Adrenal gland (tissue), 19 donors: ENCODE measurements at regions of chr11 and their contacts with region 1.

Region 1: GRCh38 chr11:14300661-14301304 is 58.2 kb downstream of the RRAS2 start:
- DNase-seq: peak; percentile 58 to 85 (median 65)
- H3K4me3 ChIP-seq: no peak overlapping the region
- H3K27ac ChIP-seq: no peak overlapping the region
- H3K4me1 ChIP-seq: peaks cover 0 to 7% of the 10 kb centered on the region in 2 donors
- H3K27me3 ChIP-seq: no peaks in the 10 kb centered on the region
- CTCF ChIP-seq: peak; percentile 71 to 88 (median 83)
- POLR2A ChIP-seq: no peak

Region 2: DNA sequence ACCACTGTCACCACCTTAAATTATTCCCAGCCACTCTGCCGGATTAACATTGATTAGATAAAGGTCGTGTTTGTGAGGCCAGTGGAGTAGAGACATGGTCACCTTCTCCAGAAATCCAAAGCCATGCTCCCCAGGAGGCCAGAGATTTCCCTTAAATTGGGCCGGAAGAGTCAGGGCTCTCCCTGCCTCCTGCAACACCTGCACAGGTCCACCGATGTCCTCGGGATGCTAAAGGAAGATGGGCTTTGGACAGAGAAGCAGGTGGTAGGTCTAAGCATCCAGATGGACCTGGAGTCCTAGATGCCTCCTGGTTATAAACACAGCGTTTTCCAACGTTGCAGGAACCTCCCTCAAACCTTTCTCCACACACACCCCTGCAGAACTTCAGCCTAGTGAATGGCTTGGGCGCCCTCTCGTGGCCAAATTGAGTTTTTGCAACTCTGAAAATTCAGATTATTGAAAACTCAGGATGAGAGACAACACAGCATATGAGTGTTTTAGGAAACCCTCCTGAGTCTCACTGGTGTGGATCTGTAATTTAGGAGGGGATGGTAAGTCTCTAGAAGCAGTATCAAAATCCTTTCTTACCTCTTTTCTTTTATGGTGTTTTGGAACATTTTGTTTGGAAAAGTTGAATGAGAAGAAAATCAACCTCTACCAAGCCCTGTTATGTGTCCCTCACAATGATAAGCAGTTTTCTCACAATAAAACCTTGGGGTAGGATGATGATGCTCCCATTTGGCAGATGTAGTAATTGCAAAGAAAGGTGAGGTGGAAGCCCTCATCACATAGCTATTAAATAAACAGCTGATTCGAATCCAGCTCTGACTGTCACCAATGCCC is 51.4 kb before region 1 on chr11:
- intact Hi-C with region 1: no loop called
- DNase-seq: peak; percentile 47 to 79 (median 54)
- H3K4me3 ChIP-seq: no peak overlapping the region
- H3K27ac ChIP-seq: no peak overlapping the region
- H3K4me1 ChIP-seq: peaks cover 0 to 15% of the 10 kb centered on the region in 2 donors
- H3K27me3 ChIP-seq: no peaks in the 10 kb centered on the region
- CTCF ChIP-seq: peak; percentile 86 to 94 (median 88)
- POLR2A ChIP-seq: no peak

Region 3: DNA sequence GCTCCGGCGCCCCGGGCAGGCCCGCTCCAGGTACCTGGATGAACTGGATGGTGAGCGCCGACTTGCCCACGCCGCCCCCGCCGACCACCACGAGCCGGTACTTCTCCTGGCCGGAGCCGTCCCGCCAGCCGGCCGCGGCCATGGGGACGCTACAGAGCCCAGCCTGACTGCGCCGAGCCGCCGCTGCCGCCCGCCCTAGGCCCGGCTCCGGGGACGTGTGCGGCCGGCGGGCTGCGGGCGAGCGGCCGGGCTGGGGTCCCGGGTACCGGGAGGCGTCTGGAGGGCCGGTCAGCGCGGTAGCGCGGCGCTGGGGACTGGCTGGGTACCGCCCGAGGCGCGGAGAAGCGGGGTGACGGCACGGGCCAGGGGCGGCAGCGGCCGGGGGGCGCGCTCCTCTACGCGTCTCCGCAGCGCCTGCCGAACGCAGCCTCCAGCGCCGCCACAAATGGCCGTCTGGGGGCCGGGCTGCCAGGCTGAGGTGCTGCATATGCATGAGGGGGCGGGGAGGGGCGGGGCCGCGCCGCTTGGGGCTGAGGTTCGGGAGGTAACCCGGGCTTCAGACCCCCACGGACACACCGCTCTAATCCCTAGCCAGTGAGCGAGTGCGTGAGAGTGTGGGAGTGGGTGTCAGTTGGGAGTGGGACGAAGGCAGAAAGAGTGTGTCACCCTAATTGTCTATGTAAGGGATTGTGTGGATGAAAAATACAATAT is 58.1 kb after region 1 on chr11 and contains the start of gene RRAS2:
- intact Hi-C with region 1: loop called in 1 of 2 experiments (anchors 10 kb)
- DNase-seq: peak; percentile 65 to 78 (median 74)
- H3K4me3 ChIP-seq: peak within 1 kb of the TSS; percentile 51 to 96 (median 59)
- H3K27ac ChIP-seq: peak within 1 kb of the TSS in 4 of 5 donors; percentile 59 to 90 (median 62)
- H3K4me1 ChIP-seq: peaks cover 5 to 9% of the 10 kb centered on the region in 2 donors
- H3K27me3 ChIP-seq: no peaks in the 10 kb centered on the region
- CTCF ChIP-seq: no peak
- POLR2A ChIP-seq: peak; percentile 54 to 85
- total RNA-seq, gene RRAS2: 19.8 to 59.3 (median 28.3) TPM

Region 4: GRCh38 chr11:14454861-14455632 is 154.3 kb after region 1 on chr11:
- intact Hi-C with region 1: loop called (anchors 5 to 10 kb)
- DNase-seq: peak; percentile 24 to 61 (median 47)
- H3K4me3 ChIP-seq: no peak overlapping the region
- H3K27ac ChIP-seq: peak overlapping the region in 1 of 5 donors; percentile 37
- H3K4me1 ChIP-seq: no peaks in the 10 kb centered on the region
- H3K27me3 ChIP-seq: no peaks in the 10 kb centered on the region
- CTCF ChIP-seq: peak; percentile 27 to 77 (median 59)
- POLR2A ChIP-seq: no peak

Region 5: GRCh38 chr11:14773755-14774154 is 473.0 kb after region 1 on chr11:
- intact Hi-C with region 1: no loop called
- DNase-seq: no peak
- H3K4me3 ChIP-seq: no peak overlapping the region
- H3K27ac ChIP-seq: no peak overlapping the region
- H3K4me1 ChIP-seq: no peaks in the 10 kb centered on the region
- H3K27me3 ChIP-seq: no peaks in the 10 kb centered on the region
- CTCF ChIP-seq: no peak
- POLR2A ChIP-seq: no peak